CD4-positive, alpha-beta T cell (primary cell): ENCODE measurements at regions of chr7 and their contacts with region 1.

Region 1: GRCh38 chr7:25093268-25093826 is 31.7 kb downstream of the CYCS start:
- DNase-seq: peak; percentile 59 to 82 (median 70)
- ATAC-seq: peak; percentile 80
- H3K4me3 ChIP-seq: no peak overlapping the region
- H3K4me3 Mint-ChIP-seq: no peak overlapping the region
- H3K27ac ChIP-seq: no peak overlapping the region
- H3K27ac Mint-ChIP-seq: no peak overlapping the region
- H3K4me1 ChIP-seq: peaks cover 9% of the 10 kb centered on the region
- H3K4me1 Mint-ChIP-seq: peaks cover 12% of the 10 kb centered on the region
- H3K27me3 ChIP-seq: no peaks in the 10 kb centered on the region
- H3K27me3 Mint-ChIP-seq: peaks cover 4% of the 10 kb centered on the region
- CTCF ChIP-seq: peak; percentile 93

Region 2: GRCh38 chr7:23570592-23571200 is 1522.7 kb before region 1 on chr7:
- CTCF ChIA-PET with region 1: no interaction called
- POLR2A ChIA-PET with region 1: no interaction called
- intact Hi-C with region 1: loop called (anchors 1 to 10 kb)
- DNase-seq: peak; percentile 48 to 83 (median 59)
- ATAC-seq: peak; percentile 81
- H3K4me3 ChIP-seq: no peak overlapping the region
- H3K4me3 Mint-ChIP-seq: no peak overlapping the region
- H3K27ac ChIP-seq: no peak overlapping the region
- H3K27ac Mint-ChIP-seq: no peak overlapping the region
- H3K4me1 ChIP-seq: peaks cover 4% of the 10 kb centered on the region
- H3K4me1 Mint-ChIP-seq: no peaks in the 10 kb centered on the region
- H3K27me3 ChIP-seq: peaks cover 0 to 2% of the 10 kb centered on the region in 2 experiments
- H3K27me3 Mint-ChIP-seq: peaks cover 16% of the 10 kb centered on the region
- CTCF ChIP-seq: peak; percentile 79

Region 3: DNA sequence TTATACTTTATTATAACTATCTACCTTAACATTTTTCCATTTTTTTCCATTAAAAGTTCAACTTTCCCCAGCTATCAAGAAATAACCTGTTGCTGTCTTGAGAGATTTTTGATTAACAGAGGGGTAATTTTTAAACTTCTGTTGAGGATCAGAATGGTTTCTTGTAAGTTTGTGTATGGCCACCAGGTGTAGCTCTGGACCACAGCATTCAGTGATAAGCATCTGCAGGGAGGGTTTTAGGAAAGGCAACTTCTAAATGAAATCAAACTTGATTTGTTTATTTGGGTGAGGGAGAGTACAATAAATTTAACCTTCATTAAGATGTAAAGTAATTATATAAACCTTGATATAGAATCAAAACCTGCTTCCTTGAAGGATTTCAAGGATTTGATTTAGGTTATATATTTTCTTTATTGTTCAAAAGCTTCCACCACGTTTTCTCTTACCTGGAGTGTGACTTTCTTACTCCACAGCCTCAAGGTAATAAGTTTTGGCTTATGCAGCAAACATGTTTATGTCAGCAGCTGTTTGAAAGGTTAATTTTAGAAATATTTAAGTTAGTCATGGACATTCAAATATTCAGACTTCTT is 1230.0 kb before region 1 on chr7:
- CTCF ChIA-PET with region 1: no interaction called
- POLR2A ChIA-PET with region 1: no interaction called
- intact Hi-C with region 1: loop called in 1 of 2 experiments (anchors 10 kb)
- DNase-seq: peak in 4 of 14 experiments; percentile 8 to 45 (median 30)
- ATAC-seq: no peak
- H3K4me3 ChIP-seq: no peak overlapping the region
- H3K4me3 Mint-ChIP-seq: no peak overlapping the region
- H3K27ac ChIP-seq: no peak overlapping the region
- H3K27ac Mint-ChIP-seq: no peak overlapping the region
- H3K4me1 ChIP-seq: no peaks in the 10 kb centered on the region
- H3K4me1 Mint-ChIP-seq: no peaks in the 10 kb centered on the region
- H3K27me3 ChIP-seq: no peaks in the 10 kb centered on the region
- H3K27me3 Mint-ChIP-seq: no peaks in the 10 kb centered on the region
- CTCF ChIP-seq: no peak

Region 4: DNA sequence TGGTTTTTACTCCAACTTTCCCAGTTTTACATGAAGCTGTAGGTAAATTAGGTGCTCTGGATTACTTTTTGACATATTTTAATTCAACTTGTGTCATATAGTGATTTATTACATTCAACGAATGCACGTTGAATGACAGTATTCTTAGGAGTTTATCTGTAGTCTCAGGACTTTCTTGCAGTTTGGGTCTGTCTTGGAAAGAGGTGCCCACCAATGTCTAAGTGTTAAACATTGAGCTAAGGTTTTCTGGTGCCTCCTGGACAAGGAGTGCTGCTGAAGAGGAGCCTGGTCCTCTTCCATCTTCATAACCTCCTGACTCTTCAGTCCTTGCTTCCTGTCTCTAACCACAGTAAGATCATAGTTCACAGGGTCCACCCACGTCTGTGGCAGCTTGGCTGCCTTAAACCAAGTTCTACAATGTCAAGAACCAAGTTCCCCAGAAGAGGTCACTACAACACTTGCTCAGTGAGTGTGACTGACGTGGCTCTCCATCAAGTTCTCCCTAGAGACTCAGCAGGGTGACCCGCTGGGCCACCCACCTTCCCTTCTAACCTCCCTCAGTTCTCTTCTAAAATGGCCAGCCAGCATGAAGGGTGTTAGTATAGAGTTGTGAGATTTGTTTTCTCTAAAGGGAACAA is 803.2 kb before region 1 on chr7:
- CTCF ChIA-PET with region 1: no interaction called
- POLR2A ChIA-PET with region 1: no interaction called
- intact Hi-C with region 1: loop called in 1 of 2 experiments (anchors 5 kb)
- DNase-seq: peak in 4 of 14 experiments; percentile 9 to 64 (median 56)
- ATAC-seq: peak; percentile 72
- H3K4me3 ChIP-seq: no peak overlapping the region
- H3K4me3 Mint-ChIP-seq: no peak overlapping the region
- H3K27ac ChIP-seq: no peak overlapping the region
- H3K27ac Mint-ChIP-seq: no peak overlapping the region
- H3K4me1 ChIP-seq: peaks cover 5% of the 10 kb centered on the region
- H3K4me1 Mint-ChIP-seq: peaks cover 12% of the 10 kb centered on the region
- H3K27me3 ChIP-seq: peaks cover 17 to 29% of the 10 kb centered on the region in 2 experiments
- H3K27me3 Mint-ChIP-seq: peaks cover 64% of the 10 kb centered on the region
- CTCF ChIP-seq: peak; percentile 14

Region 5: GRCh38 chr7:24812310-24812945 is 280.9 kb before region 1 on chr7:
- CTCF ChIA-PET with region 1: interaction called, 43 read pairs
- POLR2A ChIA-PET with region 1: interaction called, 8 read pairs
- intact Hi-C with region 1: loop called (anchors 1 kb)
- DNase-seq: peak; percentile 11 to 74 (median 38)
- ATAC-seq: peak; percentile 71
- H3K4me3 ChIP-seq: no peak overlapping the region
- H3K4me3 Mint-ChIP-seq: no peak overlapping the region
- H3K27ac ChIP-seq: no peak overlapping the region
- H3K27ac Mint-ChIP-seq: no peak overlapping the region
- H3K4me1 ChIP-seq: no peaks in the 10 kb centered on the region
- H3K4me1 Mint-ChIP-seq: no peaks in the 10 kb centered on the region
- H3K27me3 ChIP-seq: no peaks in the 10 kb centered on the region
- H3K27me3 Mint-ChIP-seq: no peaks in the 10 kb centered on the region
- CTCF ChIP-seq: peak; percentile 96

Region 6: GRCh38 chr7:25158966-25159365 is 65.6 kb after region 1 on chr7:
- CTCF ChIA-PET with region 1: no interaction called
- POLR2A ChIA-PET with region 1: no interaction called
- intact Hi-C with region 1: loop called in 1 of 2 experiments (anchors 5 kb)
- DNase-seq: no peak
- ATAC-seq: no peak
- H3K4me3 ChIP-seq: no peak overlapping the region
- H3K4me3 Mint-ChIP-seq: no peak overlapping the region
- H3K27ac ChIP-seq: no peak overlapping the region
- H3K27ac Mint-ChIP-seq: no peak overlapping the region
- H3K4me1 ChIP-seq: no peaks in the 10 kb centered on the region
- H3K4me1 Mint-ChIP-seq: no peaks in the 10 kb centered on the region
- H3K27me3 ChIP-seq: no peaks in the 10 kb centered on the region
- H3K27me3 Mint-ChIP-seq: no peaks in the 10 kb centered on the region
- CTCF ChIP-seq: no peak